Gastrocnemius medialis (tissue), 4 donors: ENCODE measurements at regions of chr7 and their contacts with region 1.

Region 1: GRCh38 chr7:108016841-108017775 is 14.1 kb upstream of the LAMB1 start:
- DNase-seq: no peak
- ATAC-seq: no peak
- H3K4me3 ChIP-seq: no peak overlapping the region
- H3K27ac ChIP-seq: no peak overlapping the region
- H3K4me1 ChIP-seq: no peaks in the 10 kb centered on the region
- H3K27me3 ChIP-seq: no peaks in the 10 kb centered on the region
- CTCF ChIP-seq: peak in 2 of 5 experiments; percentile 25 to 32
- POLR2A ChIP-seq: no peak

Region 2: DNA sequence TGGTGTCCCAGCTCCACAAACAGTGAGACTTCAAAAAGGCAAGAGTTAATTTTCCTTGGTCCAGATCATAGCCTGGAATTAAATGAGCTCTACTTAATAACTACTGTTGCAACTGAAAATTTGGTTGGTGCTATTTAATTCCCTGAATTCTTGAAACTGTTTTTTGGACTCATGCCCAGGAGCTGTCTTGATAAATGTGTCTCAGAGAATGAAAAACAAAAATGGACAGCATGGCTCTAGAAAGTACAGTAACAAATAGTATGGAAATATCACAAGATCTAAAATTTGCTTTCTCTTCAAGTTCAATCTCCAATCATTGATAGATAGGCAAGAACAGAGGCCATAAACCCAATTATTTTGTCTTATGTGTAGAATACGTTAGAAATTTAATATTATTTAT is 1398.6 kb before region 1 on chr7:
- in situ Hi-C with region 1: no loop called
- intact Hi-C with region 1: no loop called
- DNase-seq: no peak
- ATAC-seq: no peak
- H3K4me3 ChIP-seq: no peak overlapping the region
- H3K27ac ChIP-seq: no peak overlapping the region
- H3K4me1 ChIP-seq: no peaks in the 10 kb centered on the region
- H3K27me3 ChIP-seq: no peaks in the 10 kb centered on the region
- CTCF ChIP-seq: no peak
- POLR2A ChIP-seq: no peak

Region 3: DNA sequence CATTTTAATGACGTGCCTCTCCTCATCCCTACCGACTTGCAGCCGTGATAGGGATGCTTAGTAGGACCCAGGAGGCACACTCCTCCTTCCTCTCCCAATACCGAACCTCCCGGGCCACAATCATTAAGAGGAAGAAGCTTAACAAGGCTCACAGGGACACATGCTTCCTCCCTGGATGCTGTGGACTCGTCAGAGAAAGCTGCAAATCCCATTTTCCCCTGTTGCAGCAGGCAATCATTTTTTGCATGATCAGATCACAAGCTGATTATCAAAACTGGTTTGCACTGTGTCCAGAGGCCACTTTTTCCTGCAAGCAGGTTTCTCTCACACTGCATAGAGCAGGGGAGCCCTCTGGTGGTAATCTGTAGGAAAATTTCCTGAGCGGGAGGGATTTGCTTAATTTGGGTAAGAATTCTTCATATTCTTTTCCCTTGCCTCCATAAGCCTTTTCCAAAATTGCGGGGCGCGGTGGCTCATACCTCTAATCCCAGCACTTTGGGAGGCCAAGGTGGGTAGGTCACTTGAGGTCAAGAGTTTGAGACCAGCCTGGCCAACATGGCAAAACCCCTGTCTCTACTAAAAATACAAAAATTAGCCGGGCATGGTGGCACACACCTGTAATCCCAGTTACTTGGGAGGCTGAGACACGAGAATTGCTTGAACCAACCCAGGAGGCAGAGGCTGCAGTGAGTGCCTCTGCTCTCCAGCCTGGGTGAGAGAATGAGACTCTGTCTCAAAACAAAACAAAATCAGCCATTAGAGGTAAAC is 129.1 kb after region 1 on chr7:
- in situ Hi-C with region 1: no loop called
- intact Hi-C with region 1: loop called (anchors 10 kb)
- DNase-seq: peak; percentile 12 to 13
- ATAC-seq: peak in 1 of 2 donors; percentile 47
- H3K4me3 ChIP-seq: no peak overlapping the region
- H3K27ac ChIP-seq: no peak overlapping the region
- H3K4me1 ChIP-seq: no peaks in the 10 kb centered on the region
- H3K27me3 ChIP-seq: no peaks in the 10 kb centered on the region
- CTCF ChIP-seq: peak; percentile 46 to 81 (median 63)
- POLR2A ChIP-seq: no peak